CD4-positive, alpha-beta memory T cell (primary cell): ENCODE measurements at regions of chr19 and their contacts with region 1.

Region 1: GRCh38 chr19:42032431-42032830 is 37.6 kb downstream of the GRIK5 start:
- DNase-seq: no peak
- H3K4me3 ChIP-seq: no peak overlapping the region
- H3K4me3 Mint-ChIP-seq: no peak overlapping the region
- H3K27ac ChIP-seq: no peak overlapping the region
- H3K27ac Mint-ChIP-seq: no peak overlapping the region
- H3K4me1 ChIP-seq: no peaks in the 10 kb centered on the region
- H3K4me1 Mint-ChIP-seq: peaks cover 0 to 4% (median 2%) of the 10 kb centered on the region in 4 donors
- H3K27me3 ChIP-seq: no peaks in the 10 kb centered on the region
- H3K27me3 Mint-ChIP-seq: peaks cover 8 to 12% of the 10 kb centered on the region in 2 donors

Region 2: DNA sequence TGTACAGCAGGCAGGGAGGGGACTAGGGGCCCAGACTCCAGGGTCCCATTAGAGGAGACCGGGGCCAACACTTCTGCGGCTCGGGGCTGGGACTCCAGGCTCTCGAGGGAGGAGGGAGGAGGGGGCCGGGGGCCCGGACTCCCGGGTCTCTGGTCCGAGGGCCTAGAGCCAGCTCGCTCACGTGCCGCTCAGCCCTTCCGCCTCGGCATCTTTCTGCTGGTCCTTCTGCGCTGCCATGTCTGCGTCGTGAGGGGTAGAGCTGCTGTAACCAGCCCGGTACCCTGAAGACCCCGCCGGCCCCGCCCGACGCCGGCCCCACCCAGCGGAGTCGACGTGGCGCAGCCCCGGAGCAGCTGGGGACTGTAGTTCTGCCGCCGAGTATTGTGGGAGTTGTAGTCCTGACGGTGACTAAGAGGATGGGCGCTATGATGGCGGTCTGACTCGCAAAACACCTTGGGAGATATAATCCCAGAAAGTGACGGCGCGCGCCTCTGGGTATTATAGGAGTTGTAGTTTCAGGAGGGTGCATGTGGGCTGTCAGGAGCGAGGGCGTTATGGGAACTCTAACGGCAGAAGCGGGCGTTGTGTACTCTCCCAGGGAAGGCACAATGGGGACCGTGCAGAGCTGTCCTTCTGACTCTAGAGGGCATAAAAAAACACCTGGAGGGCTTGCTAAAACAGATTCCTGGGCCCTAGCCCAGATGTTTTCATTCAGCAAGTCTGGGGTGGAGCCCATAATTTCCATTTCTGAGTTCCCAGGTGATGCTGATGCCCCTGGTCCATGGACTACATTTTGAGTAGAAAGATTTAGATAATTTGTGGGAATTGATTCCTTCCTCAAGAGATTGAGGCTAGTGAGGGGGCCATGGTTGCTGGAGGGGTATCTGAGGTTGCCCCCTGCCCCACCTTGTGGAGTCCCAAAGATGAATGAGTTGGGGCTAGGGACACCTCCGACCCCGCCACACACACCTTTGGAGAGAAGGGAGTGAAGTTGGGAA is 73.1 kb before region 1 on chr19 and contains the start of gene RABAC1:
- CTCF ChIA-PET with region 1: no interaction called
- POLR2A ChIA-PET with region 1: no interaction called
- intact Hi-C with region 1: loop called (anchors 1 kb)
- DNase-seq: peak; percentile 83 to 93 (median 85)
- H3K4me3 ChIP-seq: peak within 1 kb of the TSS; percentile 73 to 85
- H3K4me3 Mint-ChIP-seq: peak within 1 kb of the TSS; percentile 90 to 97 (median 96)
- H3K27ac ChIP-seq: peak within 1 kb of the TSS; percentile 77
- H3K27ac Mint-ChIP-seq: peak within 1 kb of the TSS; percentile 82 to 99 (median 96)
- H3K4me1 ChIP-seq: peaks cover 16% of the 10 kb centered on the region
- H3K4me1 Mint-ChIP-seq: peaks cover 10 to 26% (median 17%) of the 10 kb centered on the region in 4 donors
- H3K27me3 ChIP-seq: no peaks in the 10 kb centered on the region
- H3K27me3 Mint-ChIP-seq: no peaks in the 10 kb centered on the region
- total RNA-seq, gene RABAC1: 97.4 to 100 TPM

Region 3: DNA sequence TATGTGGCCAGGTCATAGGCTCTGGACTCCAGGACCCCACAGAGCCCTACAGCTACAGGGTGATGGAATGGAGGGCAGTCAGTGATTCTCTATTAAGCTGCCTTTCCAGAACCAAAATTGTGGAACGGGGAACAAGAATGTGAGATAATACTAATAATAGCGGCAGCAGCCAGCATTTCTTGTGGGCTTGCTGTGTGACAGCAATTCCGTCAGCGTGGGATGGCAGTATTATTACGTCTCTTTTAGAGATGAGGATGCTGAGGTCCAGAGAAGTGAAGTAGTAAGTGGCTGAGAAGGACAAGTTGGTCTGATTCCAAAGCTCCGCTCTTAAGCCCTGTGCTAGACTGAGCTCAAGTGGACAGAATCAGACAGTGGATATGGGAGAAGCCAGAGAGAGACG is 13.1 kb after region 1 on chr19:
- CTCF ChIA-PET with region 1: interaction called, 18 read pairs
- POLR2A ChIA-PET with region 1: no interaction called
- intact Hi-C with region 1: no loop called
- DNase-seq: no peak
- H3K4me3 ChIP-seq: no peak overlapping the region
- H3K4me3 Mint-ChIP-seq: no peak overlapping the region
- H3K27ac ChIP-seq: no peak overlapping the region
- H3K27ac Mint-ChIP-seq: no peak overlapping the region
- H3K4me1 ChIP-seq: no peaks in the 10 kb centered on the region
- H3K4me1 Mint-ChIP-seq: peaks cover 5 to 9% (median 7%) of the 10 kb centered on the region in 4 donors
- H3K27me3 ChIP-seq: no peaks in the 10 kb centered on the region
- H3K27me3 Mint-ChIP-seq: peaks cover 3 to 7% of the 10 kb centered on the region in 2 donors

Region 4: GRCh38 chr19:42081584-42082203 is 49.3 kb after region 1 on chr19:
- CTCF ChIA-PET with region 1: no interaction called
- POLR2A ChIA-PET with region 1: no interaction called
- intact Hi-C with region 1: no loop called
- DNase-seq: no peak
- H3K4me3 ChIP-seq: no peak overlapping the region
- H3K4me3 Mint-ChIP-seq: peak overlapping the region in 2 of 8 donors; percentile 1 to 33
- H3K27ac ChIP-seq: no peak overlapping the region
- H3K27ac Mint-ChIP-seq: peak overlapping the region; percentile 9 to 91 (median 39)
- H3K4me1 ChIP-seq: peaks cover 15% of the 10 kb centered on the region
- H3K4me1 Mint-ChIP-seq: peaks cover 17 to 32% (median 28%) of the 10 kb centered on the region in 4 donors
- H3K27me3 ChIP-seq: no peaks in the 10 kb centered on the region
- H3K27me3 Mint-ChIP-seq: no peaks in the 10 kb centered on the region